ENCODE measurements at regions of chr12 and their contacts with region 1.

Region 1: GRCh38 chr12:32257695-32258496 is 141.5 kb upstream of the FGD4 start:
- DNase-seq: no peak
- H3K4me3 Mint-ChIP-seq: no peak overlapping the region
- H3K27ac Mint-ChIP-seq: no peak overlapping the region
- H3K4me1 Mint-ChIP-seq: peaks cover 9% of the 10 kb centered on the region
- H3K27me3 Mint-ChIP-seq: no peaks in the 10 kb centered on the region

Region 2: GRCh38 chr12:31804185-31804504 is 453.8 kb before region 1 on chr12:
- intact Hi-C with region 1: loop called (anchors 5 kb)
- DNase-seq: no peak
- H3K4me3 Mint-ChIP-seq: peak overlapping the region; percentile 31
- H3K27ac Mint-ChIP-seq: peak overlapping the region; percentile 14
- H3K4me1 Mint-ChIP-seq: peaks cover 40% of the 10 kb centered on the region
- H3K27me3 Mint-ChIP-seq: no peaks in the 10 kb centered on the region

Region 3: DNA sequence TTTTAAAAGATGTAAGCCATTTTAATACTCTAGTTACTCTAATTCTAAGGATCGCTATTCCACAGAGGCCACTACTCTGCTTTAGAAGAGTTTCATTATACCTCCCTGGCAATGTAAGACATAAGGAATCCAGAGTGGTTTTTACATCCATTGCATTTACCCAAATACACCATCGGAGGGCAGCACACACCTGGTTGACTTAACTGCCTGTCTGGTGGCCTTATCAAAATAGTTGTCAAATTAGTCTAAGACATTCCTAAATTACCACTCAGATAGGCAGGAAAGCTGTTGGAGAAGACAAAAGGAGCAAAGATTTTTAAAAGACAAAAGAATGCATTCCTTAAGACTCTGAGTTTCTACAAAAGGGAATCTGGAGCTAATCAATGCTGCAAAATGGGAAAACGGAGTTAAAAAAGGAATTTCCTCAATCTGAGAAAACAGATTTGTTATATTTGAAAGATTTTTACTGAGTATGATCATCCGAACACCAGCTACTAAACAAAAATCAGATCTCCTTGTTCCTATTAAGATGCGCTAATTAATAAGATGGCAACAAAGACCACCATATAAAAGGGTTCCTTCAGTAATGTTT is 107.7 kb after region 1 on chr12:
- intact Hi-C with region 1: no loop called
- DNase-seq: peak; percentile 14
- H3K4me3 Mint-ChIP-seq: no peak overlapping the region
- H3K27ac Mint-ChIP-seq: no peak overlapping the region
- H3K4me1 Mint-ChIP-seq: no peaks in the 10 kb centered on the region
- H3K27me3 Mint-ChIP-seq: no peaks in the 10 kb centered on the region

Measured in activated T-helper 1 cell treated with anti-CD3 and anti-CD28 coated beads, Interleukin-12 subunit alpha, Interleukin-12 subunit beta, Interleukin-2, Interleukin-4 antibody, amounts not matched to agents 30 ng/mL and 10 ng/mL and 1 ng/mL, durations not matched to agents 14 hours and 24 hours and 36 hours (primary cell).